KBM-7 (cell line): ENCODE measurements at regions of chr10 and their contacts with region 1.

Region 1: DNA sequence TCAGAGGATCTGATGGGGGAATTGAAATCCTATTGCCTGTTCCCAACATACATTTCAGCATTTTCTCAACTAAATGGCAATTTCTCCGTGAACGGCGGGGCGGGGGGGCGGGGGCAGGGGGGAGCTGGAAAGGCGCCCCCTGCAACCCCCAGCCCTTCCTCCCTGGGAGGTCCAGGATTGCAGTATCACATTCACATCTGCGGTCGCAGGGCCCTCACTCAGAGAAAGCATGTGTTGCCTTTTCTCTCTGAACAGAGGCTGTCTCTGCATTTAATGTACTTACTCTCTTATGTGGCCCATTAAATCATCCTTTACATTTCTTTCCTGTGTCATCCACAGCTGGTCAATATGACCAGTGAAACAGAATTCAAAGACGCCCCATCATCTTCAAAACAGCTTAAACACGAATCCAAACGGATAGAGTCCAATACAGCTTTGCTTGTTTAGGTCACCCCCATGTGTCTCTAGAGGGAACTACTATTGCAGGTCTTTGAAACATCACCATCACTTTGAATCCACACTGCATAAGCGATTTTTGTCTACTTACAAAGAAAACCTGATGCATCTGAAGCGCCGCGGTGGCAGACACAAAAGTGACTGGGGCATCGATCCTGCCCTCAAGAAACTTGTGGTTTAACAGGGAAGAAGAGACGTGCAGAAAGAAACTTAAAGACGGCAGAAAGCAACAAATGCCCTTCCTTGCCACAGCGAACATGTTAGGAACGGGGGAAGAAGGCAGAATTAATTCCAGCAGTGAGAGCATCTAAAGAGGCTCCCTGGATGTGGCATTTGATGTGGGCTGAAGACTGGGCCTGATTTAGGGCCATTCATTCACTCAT is 17.0 kb upstream of the ECHDC3 start:
- DNase-seq: peak; percentile 74

Region 2: DNA sequence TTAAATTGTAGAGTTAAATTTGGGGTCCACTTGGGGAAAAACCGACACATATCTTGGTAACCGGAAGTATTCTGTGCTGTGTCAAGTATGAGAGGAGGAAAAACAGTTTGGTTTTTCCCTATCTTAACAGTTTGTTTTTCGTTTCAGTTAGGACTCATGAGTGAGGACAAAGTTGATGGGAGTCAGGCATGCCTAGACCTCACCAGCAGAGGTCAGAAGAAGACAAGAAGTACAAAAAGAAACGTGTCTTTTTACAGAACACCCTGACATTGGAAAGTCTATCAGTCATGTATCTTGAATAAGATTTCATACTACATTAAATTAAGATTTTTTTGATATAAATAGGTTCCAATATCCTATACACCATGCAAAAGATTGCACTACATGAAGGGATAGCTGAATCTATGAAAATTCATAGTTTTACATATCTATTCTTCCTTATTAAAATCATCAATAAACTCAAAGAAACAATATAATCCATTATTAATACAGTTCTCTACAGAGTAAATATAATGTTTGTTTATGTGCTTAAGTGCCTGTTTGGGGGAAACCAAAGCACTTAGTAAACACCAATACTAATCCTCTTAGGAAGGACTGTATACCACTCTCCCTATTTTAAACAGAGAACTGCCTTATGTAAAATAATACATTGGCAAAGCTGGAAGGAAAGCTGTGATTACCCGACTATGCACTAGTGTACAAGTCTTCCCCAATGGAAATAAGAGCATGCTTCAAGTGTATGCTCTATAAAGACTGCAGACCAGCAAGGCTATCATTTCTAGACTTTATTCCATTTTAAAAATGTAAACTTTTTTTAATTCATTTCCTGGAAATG is 209.3 kb before region 1 on chr10:
- in situ Hi-C with region 1: loop called (anchors 10 kb)
- DNase-seq: peak; percentile 75